PC-3 (cell line): ENCODE measurements at regions of chr2 and their contacts with region 1.

Region 1: DNA sequence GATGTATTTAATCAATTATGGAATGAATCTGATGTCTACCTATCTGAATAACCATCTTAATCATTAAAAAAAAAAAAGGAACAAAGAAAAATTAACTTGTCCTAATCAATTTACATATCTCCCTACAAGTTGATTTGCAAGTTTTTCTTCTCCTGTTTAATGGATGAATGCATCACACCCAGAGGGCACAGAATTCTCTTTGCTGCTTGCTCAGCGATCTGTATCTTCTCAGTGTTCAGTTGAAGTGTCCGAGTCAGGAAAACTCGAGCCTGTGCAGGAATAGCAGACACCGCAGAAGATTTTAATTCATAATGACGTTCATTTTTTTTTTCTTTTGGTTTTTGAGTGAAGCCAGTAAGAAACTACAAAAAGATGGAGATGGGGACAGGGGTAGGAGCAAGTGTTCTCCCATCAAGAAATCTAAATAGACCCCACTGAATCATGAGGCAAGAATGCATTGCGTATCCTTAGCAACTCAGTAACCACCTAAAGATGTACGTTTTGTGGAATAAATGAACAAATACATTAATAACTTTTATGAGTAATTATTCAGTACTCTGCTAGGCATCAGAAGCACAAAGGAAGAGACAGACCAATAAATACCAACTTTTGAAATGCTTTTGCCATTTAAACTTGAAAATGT is 675.5 kb downstream of the LRP1B start:
- DNase-seq: peak; percentile 35
- ATAC-seq: no peak
- H3K4me3 ChIP-seq: no peak overlapping the region
- H3K27ac ChIP-seq: no peak overlapping the region
- H3K4me1 ChIP-seq: no peaks in the 10 kb centered on the region
- H3K27me3 ChIP-seq: no peaks in the 10 kb centered on the region
- CTCF ChIP-seq: no peak

Region 2: GRCh38 chr2:141055531-141055930 is 399.8 kb before region 1 on chr2:
- CTCF ChIA-PET with region 1: no interaction called
- POLR2A ChIA-PET with region 1: no interaction called
- intact Hi-C with region 1: loop called (anchors 10 kb)
- DNase-seq: peak; percentile 69
- ATAC-seq: peak; percentile 95
- H3K4me3 ChIP-seq: no peak overlapping the region
- H3K27ac ChIP-seq: no peak overlapping the region
- H3K4me1 ChIP-seq: peaks cover 6% of the 10 kb centered on the region; the same call in 1 of the 2 replicates
- H3K27me3 ChIP-seq: no peaks in the 10 kb centered on the region
- CTCF ChIP-seq: no peak

Region 3: DNA sequence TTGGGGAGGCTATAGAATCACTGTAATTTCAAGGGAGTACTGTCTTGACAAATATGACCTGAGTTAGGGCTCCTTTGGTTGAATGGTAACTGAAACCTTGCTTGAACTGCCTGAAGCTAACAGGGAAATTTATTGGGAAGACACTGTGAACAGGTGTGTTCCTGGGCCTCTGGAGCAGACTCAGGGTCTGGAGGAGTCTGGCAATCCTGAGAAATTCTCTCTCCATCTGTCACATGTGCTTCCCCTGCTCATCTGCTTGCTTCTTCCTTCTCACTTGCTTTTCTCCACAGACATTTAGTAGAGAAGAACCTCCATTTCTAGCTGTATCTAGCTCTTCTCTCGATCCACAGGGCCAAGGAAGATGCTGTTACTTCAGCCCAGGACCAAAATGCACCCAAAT is 199.0 kb after region 1 on chr2:
- CTCF ChIA-PET with region 1: no interaction called
- POLR2A ChIA-PET with region 1: no interaction called
- intact Hi-C with region 1: no loop called
- DNase-seq: no peak
- ATAC-seq: no peak
- H3K4me3 ChIP-seq: no peak overlapping the region
- H3K27ac ChIP-seq: no peak overlapping the region
- H3K4me1 ChIP-seq: no peaks in the 10 kb centered on the region
- H3K27me3 ChIP-seq: no peaks in the 10 kb centered on the region
- CTCF ChIP-seq: no peak